WTC11 (cell line): ENCODE measurements at regions of chr12 and their contacts with region 1.

Region 1: GRCh38 chr12:48865434-48866290 is at the start of gene RND1:
- DNase-seq: peak; percentile 92
- ATAC-seq: peak; percentile 96
- H3K4me3 Mint-ChIP-seq: peak within 1 kb of the TSS; percentile 91
- H3K27ac Mint-ChIP-seq: peak within 1 kb of the TSS; percentile 94
- H3K4me1 Mint-ChIP-seq: peaks cover 44% of the 10 kb centered on the region
- H3K27me3 Mint-ChIP-seq: peaks cover 6% of the 10 kb centered on the region; the same call in 1 of the 2 replicates
- CTCF ChIP-seq: no peak
- total RNA-seq, gene RND1: 7.6 to 9.1 TPM (median 8.5 TPM) in 3 replicates

Region 2: DNA sequence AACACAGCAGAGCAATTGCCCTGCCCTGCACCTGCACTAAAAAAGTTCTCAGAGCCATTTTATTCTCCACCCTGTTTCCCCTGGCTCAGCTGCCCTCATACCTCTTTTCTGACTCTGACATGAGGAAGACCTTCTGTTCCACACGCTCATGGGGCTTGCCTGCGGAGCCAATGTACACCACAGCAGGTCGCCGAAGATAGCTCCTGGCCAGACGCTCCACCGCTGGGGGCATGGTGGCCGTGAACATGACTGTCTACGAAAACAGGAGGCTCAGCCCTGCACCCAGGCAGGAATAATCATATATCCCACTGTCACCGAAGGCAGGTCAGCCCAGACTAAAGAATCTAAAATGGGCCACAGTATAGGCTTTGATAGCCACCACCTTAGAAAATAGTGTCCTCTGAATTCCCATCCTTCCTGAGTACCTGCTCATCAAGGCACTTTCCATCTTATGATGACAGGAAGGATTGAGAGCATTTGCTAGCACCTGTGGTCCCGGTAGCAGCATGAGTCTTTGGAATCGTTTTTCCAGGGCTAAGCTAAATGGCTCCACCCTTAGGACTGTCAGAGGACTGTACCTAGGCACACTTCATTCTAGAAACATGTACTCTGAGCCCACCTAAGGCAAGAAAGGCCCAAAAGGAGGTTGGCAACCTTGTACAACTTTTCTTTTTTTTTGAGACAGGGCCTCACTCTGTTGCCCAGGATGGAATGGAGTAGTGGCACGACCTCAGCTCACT is 33.2 kb before region 1 on chr12:
- CTCF ChIA-PET with region 1: no interaction called
- POLR2A ChIA-PET with region 1: no interaction called
- DNase-seq: no peak
- ATAC-seq: no peak
- H3K4me3 Mint-ChIP-seq: no peak overlapping the region
- H3K27ac Mint-ChIP-seq: no peak overlapping the region
- H3K4me1 Mint-ChIP-seq: no peaks in the 10 kb centered on the region
- H3K27me3 Mint-ChIP-seq: no peaks in the 10 kb centered on the region
- CTCF ChIP-seq: no peak

Region 3: DNA sequence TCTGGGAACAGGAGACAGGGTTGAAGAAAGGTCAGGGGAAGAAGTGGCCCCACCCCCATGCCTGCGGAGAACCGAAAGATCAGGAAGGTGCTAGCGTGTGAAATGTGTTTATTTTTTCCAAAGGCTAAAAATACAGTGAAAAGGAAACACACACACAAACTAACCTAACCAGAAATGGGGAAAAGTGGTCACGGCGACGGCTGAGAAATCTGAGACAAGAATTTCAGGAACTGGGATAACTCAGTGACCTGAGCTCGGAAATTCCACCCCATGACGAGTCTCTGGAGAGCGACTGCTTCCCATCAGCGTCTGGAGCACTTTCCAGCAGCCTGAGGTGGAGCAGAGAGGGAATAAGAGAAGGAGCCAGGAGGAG is 16.6 kb after region 1 on chr12:
- CTCF ChIA-PET with region 1: interaction called, 22 read pairs
- POLR2A ChIA-PET with region 1: interaction called, 32 read pairs
- DNase-seq: peak; percentile 26
- ATAC-seq: peak; percentile 50
- H3K4me3 Mint-ChIP-seq: peak overlapping the region; percentile 50
- H3K27ac Mint-ChIP-seq: peak overlapping the region; percentile 56
- H3K4me1 Mint-ChIP-seq: peaks cover 33% of the 10 kb centered on the region
- H3K27me3 Mint-ChIP-seq: peaks cover 7% of the 10 kb centered on the region
- CTCF ChIP-seq: no peak